A549 (cell line): ENCODE measurements at regions of chr6 and their contacts with region 1.

Region 1: GRCh38 chr6:28895134-28895812 is 28.5 kb downstream of the TRIM27 start:
- DNase-seq: peak; percentile 87 to 94
- ATAC-seq: peak; percentile 88 to 91
- H3K4me3 ChIP-seq: peak overlapping the region; percentile 68
- H3K27ac ChIP-seq: peak overlapping the region; percentile 86 to 92
- H3K4me1 ChIP-seq: no peaks in the 10 kb centered on the region
- CTCF ChIP-seq: no peak
- EP300 ChIP-seq: no peak
- POLR2A ChIP-seq: peak; percentile 59
- RAD21 ChIP-seq: no peak

Region 2: GRCh38 chr6:28632326-28632851 is 262.9 kb before region 1 on chr6:
- CTCF ChIA-PET with region 1: no interaction called
- POLR2A ChIA-PET with region 1: no interaction called
- DNase-seq: no peak
- ATAC-seq: no peak
- H3K4me3 ChIP-seq: no peak overlapping the region
- H3K27ac ChIP-seq: no peak overlapping the region
- H3K4me1 ChIP-seq: no peaks in the 10 kb centered on the region
- CTCF ChIP-seq: no peak
- EP300 ChIP-seq: no peak
- POLR2A ChIP-seq: no peak
- RAD21 ChIP-seq: no peak

Region 3: GRCh38 chr6:28863604-28864320 is 31.5 kb before region 1 on chr6:
- CTCF ChIA-PET with region 1: interaction called, 4 read pairs
- POLR2A ChIA-PET with region 1: interaction called, 28 read pairs
- DNase-seq: peak in 1 of 2 experiments; percentile 87
- ATAC-seq: peak; percentile 74 to 75
- H3K4me3 ChIP-seq: peak overlapping the region; percentile 71
- H3K27ac ChIP-seq: peak overlapping the region; percentile 70 to 80
- H3K4me1 ChIP-seq: peaks cover 3% of the 10 kb centered on the region; the same call in 2 of the 3 replicates
- CTCF ChIP-seq: no peak; the same call in 2 of the 3 replicates
- EP300 ChIP-seq: no peak
- POLR2A ChIP-seq: no peak
- RAD21 ChIP-seq: peak in 1 of 2 experiments; percentile 46; a peak in 2 of 5 replicates

Region 4: GRCh38 chr6:28880894-28881780 is 14.1 kb before region 1 on chr6:
- CTCF ChIA-PET with region 1: interaction called, 4 read pairs
- POLR2A ChIA-PET with region 1: interaction called, 22 read pairs
- DNase-seq: peak in 1 of 2 experiments; percentile 74
- ATAC-seq: peak; percentile 70 to 81
- H3K4me3 ChIP-seq: peak overlapping the region; percentile 57
- H3K27ac ChIP-seq: peak overlapping the region; percentile 70 to 84
- H3K4me1 ChIP-seq: peaks cover 6% of the 10 kb centered on the region; the same call in 2 of the 3 replicates
- CTCF ChIP-seq: no peak
- EP300 ChIP-seq: no peak
- POLR2A ChIP-seq: no peak
- RAD21 ChIP-seq: no peak

Region 5: DNA sequence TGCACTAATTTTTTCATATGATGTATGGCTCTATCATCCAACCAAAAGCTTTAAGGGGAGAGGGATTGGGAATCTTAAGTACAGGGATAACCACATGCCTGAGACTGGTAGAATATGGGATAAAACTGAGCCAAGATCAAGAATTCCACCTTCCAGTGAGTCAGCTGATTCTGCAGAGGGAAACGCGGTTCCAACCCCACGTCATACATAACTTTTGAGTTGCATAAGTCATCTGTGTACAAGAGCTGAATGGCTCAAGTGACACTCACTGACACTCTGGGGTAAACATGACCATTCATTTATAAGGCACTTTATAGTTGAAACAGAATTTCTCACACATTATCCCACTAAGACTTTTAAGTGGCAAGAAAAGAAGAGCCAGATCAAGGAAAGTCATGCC is 12.1 kb after region 1 on chr6:
- CTCF ChIA-PET with region 1: no interaction called
- POLR2A ChIA-PET with region 1: interaction called, 15 read pairs
- DNase-seq: no peak
- ATAC-seq: no peak
- H3K4me3 ChIP-seq: no peak overlapping the region
- H3K27ac ChIP-seq: no peak overlapping the region
- H3K4me1 ChIP-seq: no peaks in the 10 kb centered on the region
- CTCF ChIP-seq: no peak
- EP300 ChIP-seq: no peak
- POLR2A ChIP-seq: no peak
- RAD21 ChIP-seq: no peak

Region 6: DNA sequence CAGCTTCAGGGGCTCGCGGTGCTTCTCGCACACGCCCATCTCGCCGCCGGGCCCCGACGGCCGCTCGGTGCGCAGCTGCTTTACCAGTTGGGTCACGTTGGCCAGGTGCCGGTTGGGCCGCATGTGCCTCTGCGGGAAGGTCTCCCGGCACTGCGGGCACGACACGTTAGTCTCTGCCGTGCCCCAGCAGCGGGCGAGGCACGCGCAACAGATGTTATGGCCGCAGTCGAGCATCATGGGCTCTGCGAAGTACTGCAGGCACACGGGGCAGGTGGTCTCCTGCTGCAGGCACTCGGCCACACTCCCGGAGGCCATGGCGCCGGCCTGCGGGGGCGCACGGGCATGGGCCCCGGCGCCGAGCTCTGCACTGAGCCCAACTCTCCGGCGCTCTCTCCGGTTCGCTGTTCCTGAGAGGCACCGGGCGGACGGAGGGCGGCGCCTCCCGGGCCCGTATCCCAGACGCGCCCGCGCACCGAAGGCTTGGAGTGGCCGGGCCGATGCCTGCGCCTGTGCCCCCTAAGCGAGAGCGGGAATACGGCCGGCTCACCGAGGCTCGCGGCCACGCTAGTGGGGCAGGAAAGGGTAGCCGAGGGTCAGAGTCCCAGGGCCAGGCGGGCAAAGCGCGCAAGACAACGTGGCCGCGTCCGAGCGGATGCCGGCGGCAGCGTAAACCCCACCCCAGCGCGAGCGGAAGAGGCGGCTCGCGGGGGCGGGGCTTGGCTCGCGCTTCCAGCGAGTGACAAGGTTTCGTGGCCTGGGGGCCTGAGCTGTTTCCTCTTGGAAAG is 28.2 kb after region 1 on chr6 and contains the start of gene TRIM27:
- CTCF ChIA-PET with region 1: no interaction called
- POLR2A ChIA-PET with region 1: interaction called, 22 read pairs
- DNase-seq: peak; percentile 75 to 85
- ATAC-seq: peak; percentile 92 to 95
- H3K4me3 ChIP-seq: peak within 1 kb of the TSS; percentile 97
- H3K27ac ChIP-seq: peak within 1 kb of the TSS; percentile 96 to 99
- H3K4me1 ChIP-seq: peaks cover 17% of the 10 kb centered on the region
- CTCF ChIP-seq: no peak
- EP300 ChIP-seq: no peak
- POLR2A ChIP-seq: peak; percentile 91
- RAD21 ChIP-seq: no peak
- polyA plus RNA-seq, gene TRIM27: 50.1 and 51.4 TPM in 2 replicates

Region 7: DNA sequence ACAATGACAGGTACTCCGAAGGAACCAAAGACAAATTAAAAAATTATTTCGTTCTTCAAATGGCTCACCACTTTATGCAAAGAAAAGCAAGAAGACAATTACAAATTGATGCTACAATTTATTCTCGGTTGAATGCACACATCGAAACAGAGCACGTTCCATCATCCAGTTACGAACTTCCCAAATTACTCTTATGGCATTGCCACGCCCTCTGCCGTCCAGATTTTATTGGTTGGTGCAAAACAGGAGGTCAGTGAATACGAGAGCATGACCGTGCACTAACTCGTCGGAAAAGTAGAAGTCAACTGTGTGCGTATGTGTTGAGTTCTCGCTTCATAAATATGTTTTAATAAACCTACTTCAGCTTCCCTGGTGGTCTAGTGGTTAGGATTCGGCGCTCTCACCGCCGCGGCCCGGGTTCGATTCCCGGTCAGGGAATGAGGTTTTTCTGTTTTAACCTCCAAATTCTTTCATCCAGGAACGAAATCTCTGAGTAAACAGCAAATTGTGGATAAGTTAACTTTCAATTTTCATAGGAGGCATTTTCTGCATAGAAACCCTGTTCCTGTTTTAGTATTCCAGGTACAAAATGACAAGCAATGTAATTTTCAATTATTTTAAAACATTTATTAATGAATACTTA is 86.7 kb after region 1 on chr6:
- CTCF ChIA-PET with region 1: interaction called, 3 read pairs
- POLR2A ChIA-PET with region 1: interaction called, 13 read pairs
- DNase-seq: peak; percentile 27 to 91
- ATAC-seq: peak; percentile 17 to 52; a peak in 3 of 6 replicates
- H3K4me3 ChIP-seq: peak overlapping the region; percentile 80
- H3K27ac ChIP-seq: peak overlapping the region; percentile 72 to 83
- H3K4me1 ChIP-seq: peaks cover 10% of the 10 kb centered on the region
- CTCF ChIP-seq: no peak
- EP300 ChIP-seq: no peak
- POLR2A ChIP-seq: no peak
- RAD21 ChIP-seq: no peak